HEK293 (cell line): ENCODE measurements at regions of chr6 and their contacts with region 1.

Region 1: DNA sequence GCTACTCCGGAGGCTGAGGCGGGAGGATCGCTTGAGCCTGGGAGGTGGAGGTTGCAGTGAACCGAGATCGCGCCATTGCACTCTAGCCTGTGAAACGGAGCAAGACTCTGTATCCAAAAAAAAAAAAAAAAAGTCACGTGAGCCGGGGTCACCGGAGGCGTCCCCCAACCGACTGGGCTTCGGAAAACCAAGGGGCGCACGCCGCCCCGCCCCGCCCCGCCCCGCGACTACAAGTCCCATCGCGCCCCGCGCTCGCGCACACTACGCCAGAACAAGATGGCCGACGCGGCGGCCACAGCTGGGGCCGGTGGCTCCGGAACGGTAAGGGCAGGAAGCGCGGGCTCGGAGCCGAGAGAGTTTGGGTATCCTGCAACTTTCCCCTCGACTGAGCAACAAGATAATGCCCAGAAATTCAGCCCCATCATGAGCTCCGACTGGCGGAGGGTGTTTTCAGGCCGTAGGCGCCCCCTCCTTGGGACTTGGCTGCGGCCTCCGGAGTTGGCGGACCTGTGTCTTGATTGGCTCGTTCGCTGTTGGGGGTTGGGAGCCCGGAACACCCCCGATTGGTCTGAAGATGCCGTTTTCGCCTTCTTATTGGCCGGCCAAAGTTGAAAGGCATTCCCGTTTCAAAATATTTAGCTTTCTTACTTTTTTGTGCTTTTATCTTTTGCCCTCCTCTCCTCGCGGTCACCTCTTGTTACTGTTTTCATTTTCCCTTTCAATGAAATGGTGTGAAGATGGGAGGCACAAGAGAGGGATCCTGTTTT is at the start of gene TAF8:
- H3K4me3 ChIP-seq: peak within 1 kb of the TSS; percentile 98
- H3K27ac ChIP-seq: peak within 1 kb of the TSS; percentile 86
- H3K4me1 ChIP-seq: peaks cover 14% of the 10 kb centered on the region
- CTCF ChIP-seq: peak; percentile 50; the same call in 1 of the 2 replicates

Region 2: DNA sequence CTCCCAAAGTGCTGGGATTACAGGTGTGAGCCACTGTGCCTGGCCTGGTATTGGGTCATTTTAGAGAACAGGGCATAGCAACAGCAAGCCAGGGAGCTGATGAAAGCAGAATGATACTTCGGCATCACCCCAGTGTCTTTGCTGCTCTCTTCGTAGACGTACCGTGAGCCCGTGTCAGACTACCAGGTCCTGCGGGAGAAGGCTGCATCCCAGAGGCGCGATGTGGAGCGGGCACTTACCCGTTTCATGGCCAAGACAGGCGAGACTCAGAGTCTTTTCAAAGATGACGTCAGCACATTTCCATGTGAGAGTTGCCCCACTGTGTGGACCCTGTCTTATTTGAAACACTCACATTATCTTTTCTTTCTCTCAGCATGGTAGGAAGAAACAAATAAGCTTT is 15.7 kb after region 1 on chr6:
- CTCF ChIA-PET with region 1: no interaction called
- POLR2A ChIA-PET with region 1: interaction called, 10 read pairs
- H3K4me3 ChIP-seq: no peak overlapping the region
- H3K27ac ChIP-seq: no peak overlapping the region
- H3K4me1 ChIP-seq: no peaks in the 10 kb centered on the region
- CTCF ChIP-seq: no peak